Activated CD8-positive, alpha-beta T cell treated with anti-CD3 and anti-CD28 coated beads for 36 hours (primary cell): ENCODE measurements at regions of chr1 and their contacts with region 1.

Region 1: GRCh38 chr1:16386454-16387113 is 19.5 kb downstream of the SZRD1 start:
- DNase-seq: no peak
- ATAC-seq: peak; percentile 48
- H3K4me3 Mint-ChIP-seq: peak overlapping the region; percentile 56
- H3K27ac Mint-ChIP-seq: peak overlapping the region; percentile 86
- H3K4me1 Mint-ChIP-seq: peaks cover 71% of the 10 kb centered on the region
- H3K27me3 Mint-ChIP-seq: no peaks in the 10 kb centered on the region
- CTCF ChIP-seq: no peak

Region 2: GRCh38 chr1:16375521-16376359 is 10.8 kb before region 1 on chr1:
- CTCF ChIA-PET with region 1: interaction called, 3 read pairs
- POLR2A ChIA-PET with region 1: interaction called, 14 read pairs
- intact Hi-C with region 1: no loop called
- DNase-seq: no peak
- ATAC-seq: no peak
- H3K4me3 Mint-ChIP-seq: no peak overlapping the region
- H3K27ac Mint-ChIP-seq: peak overlapping the region; percentile 75
- H3K4me1 Mint-ChIP-seq: peaks cover 70% of the 10 kb centered on the region
- H3K27me3 Mint-ChIP-seq: no peaks in the 10 kb centered on the region
- CTCF ChIP-seq: no peak

Region 3: DNA sequence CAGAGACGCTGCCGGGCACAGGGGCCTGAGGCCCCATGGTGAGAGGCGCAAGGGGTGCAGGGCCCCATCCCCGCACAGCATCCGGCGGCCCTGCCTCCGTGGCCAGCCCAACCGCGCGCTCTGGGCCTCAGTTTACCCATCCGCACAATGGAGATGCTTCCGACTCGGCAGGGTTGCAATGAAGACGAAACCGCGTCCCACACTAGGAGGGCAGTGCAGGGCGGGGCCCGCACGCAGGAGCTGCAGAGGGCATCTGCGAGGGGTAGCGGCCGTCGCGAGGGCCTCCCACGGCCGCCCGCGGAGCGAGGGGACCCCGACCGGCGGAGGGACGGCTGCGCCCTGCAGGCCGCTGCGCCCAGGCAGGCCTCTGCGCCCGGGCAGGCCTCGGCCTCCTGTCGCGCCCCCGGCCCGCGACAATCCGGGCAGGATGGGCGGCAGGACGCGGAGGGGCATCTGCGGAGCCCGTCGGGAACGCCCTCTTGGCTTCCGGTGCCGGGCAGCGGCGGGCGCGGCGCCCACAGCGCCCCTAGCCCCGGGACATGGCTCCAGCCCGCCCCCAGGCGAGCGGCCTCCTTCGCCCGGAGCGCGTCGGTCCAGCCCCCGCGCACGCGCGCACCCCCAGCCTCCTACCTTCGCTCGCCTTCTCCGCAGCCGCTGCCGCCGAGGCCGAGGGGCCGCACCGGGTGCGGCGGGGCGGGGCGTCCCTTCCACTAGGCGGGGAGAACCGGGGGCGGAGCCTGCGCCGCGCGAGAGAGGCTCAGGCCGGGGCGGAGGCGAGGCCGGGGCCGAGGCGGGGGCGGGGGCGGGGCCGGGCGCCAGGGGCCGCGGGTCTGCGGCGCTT is 112.2 kb after region 1 on chr1:
- CTCF ChIA-PET with region 1: no interaction called
- POLR2A ChIA-PET with region 1: no interaction called
- intact Hi-C with region 1: no loop called
- DNase-seq: peak; percentile 88
- ATAC-seq: peak; percentile 95
- H3K4me3 Mint-ChIP-seq: peak overlapping the region; percentile 76
- H3K27ac Mint-ChIP-seq: no peak overlapping the region
- H3K4me1 Mint-ChIP-seq: peaks cover 18% of the 10 kb centered on the region
- H3K27me3 Mint-ChIP-seq: no peaks in the 10 kb centered on the region
- CTCF ChIP-seq: no peak